ENCODE measurements at regions of chr18 and their contacts with region 1.

Region 1: GRCh38 chr18:50356036-50356945 is 18.6 kb upstream of the SKA1 start:
- H3K4me3 ChIP-seq: no peak overlapping the region
- H3K27ac ChIP-seq: no peak overlapping the region
- H3K4me1 ChIP-seq: peaks cover 3% of the 10 kb centered on the region; the same call in 1 of the 2 replicates
- CTCF ChIP-seq: peak; percentile 25; the same call in 1 of the 2 replicates

Region 2: DNA sequence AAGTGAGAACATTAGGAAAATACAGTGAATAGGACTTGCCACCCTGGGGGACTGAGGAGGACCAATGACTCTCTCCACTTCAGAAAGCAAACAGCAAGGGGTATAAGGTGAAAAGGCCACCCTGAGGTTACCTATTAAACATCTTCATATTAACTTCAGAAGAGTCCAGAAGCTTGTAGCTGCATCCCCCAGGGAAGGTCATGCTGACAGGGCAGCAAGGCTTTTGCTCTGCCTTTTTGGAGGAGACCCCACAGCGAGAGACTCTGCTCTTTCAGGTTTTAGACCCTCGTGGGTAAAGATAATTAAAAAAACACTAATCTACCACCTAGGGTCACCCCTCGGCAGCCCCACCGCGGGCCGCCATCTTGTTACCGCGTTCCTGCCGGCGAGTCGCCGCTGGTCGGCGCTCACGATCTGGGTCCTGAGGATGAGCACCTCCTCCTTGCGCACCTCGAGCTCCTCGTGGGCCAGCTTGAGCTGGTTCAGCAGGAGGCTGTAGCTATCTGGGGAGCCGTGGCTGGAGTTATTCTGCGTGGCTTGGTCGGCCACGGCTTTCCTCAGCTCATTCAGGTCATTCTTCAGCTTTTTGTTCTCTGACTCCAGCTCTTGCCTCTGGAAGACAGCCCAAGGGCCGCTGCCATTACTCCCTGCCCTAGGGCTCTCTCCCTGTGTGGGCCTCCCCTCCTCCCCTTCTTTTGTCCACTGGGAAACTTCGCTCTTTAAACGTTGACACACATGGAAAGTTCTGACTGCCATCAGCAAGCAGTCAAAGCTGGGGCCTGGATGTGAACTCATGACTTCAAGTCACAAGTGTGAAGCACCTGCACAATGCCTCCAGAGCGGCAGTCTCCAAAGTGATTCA is 492.3 kb before region 1 on chr18:
- CTCF ChIA-PET with region 1: interaction called, 11 read pairs
- POLR2A ChIA-PET with region 1: no interaction called
- H3K4me3 ChIP-seq: peak overlapping the region; percentile 14; the same call in 1 of the 2 replicates
- H3K27ac ChIP-seq: no peak overlapping the region; the same call in 1 of the 2 replicates
- H3K4me1 ChIP-seq: no peaks in the 10 kb centered on the region
- CTCF ChIP-seq: peak; percentile 71

Region 3: DNA sequence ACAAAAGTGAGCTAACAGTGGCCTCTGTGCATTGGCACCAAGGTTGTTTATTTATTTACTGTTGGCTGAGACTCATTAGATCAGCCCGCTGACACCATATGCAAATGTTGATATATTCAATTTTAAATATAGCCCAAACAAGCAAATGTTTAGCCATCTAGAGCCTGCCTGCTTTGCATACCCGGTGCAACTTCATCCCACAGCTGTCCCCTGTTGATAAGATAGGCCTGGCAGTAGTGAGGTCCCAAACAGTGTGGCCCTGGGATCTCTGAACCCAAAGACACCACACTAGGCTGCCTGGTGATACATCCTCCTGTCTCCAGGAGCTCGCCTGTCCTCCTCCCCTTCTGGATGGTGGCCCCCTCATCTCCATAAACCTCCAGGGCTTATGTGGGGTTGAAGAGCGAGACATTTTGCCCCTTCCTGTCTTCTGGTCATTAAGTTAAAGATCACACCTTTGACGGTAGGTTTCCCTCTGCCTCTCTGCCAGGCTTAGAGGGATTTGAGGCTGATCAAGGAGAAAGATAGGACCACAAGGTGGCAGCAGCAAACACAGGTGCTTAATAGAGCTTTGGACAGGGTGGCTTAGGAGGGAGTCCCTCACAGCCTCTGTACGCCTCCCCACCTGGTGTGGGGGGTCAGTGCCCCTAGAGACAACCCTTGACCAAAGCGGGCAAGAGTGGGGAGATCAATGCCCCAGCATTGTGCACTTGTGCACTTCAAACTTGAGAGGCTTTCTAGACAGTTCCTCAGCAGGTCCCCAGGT is 137.7 kb before region 1 on chr18:
- CTCF ChIA-PET with region 1: interaction called, 88 read pairs
- POLR2A ChIA-PET with region 1: no interaction called
- H3K4me3 ChIP-seq: no peak overlapping the region
- H3K27ac ChIP-seq: no peak overlapping the region
- H3K4me1 ChIP-seq: no peaks in the 10 kb centered on the region
- CTCF ChIP-seq: peak; percentile 63; the same call in 1 of the 2 replicates

Region 4: GRCh38 chr18:50240083-50240563 is 116.2 kb before region 1 on chr18:
- CTCF ChIA-PET with region 1: interaction called, 10 read pairs
- POLR2A ChIA-PET with region 1: no interaction called
- H3K4me3 ChIP-seq: no peak overlapping the region
- H3K27ac ChIP-seq: no peak overlapping the region
- H3K4me1 ChIP-seq: no peaks in the 10 kb centered on the region
- CTCF ChIP-seq: no peak

Region 5: GRCh38 chr18:50281295-50281971 is 74.9 kb before region 1 on chr18 and contains the start of gene MBD1:
- CTCF ChIA-PET with region 1: interaction called, 6 read pairs
- POLR2A ChIA-PET with region 1: interaction called, 10 read pairs
- H3K4me3 ChIP-seq: peak within 1 kb of the TSS; percentile 93
- H3K27ac ChIP-seq: peak within 1 kb of the TSS; percentile 74
- H3K4me1 ChIP-seq: peaks cover 6% of the 10 kb centered on the region; the same call in 1 of the 2 replicates
- CTCF ChIP-seq: peak; percentile 93

Region 6: DNA sequence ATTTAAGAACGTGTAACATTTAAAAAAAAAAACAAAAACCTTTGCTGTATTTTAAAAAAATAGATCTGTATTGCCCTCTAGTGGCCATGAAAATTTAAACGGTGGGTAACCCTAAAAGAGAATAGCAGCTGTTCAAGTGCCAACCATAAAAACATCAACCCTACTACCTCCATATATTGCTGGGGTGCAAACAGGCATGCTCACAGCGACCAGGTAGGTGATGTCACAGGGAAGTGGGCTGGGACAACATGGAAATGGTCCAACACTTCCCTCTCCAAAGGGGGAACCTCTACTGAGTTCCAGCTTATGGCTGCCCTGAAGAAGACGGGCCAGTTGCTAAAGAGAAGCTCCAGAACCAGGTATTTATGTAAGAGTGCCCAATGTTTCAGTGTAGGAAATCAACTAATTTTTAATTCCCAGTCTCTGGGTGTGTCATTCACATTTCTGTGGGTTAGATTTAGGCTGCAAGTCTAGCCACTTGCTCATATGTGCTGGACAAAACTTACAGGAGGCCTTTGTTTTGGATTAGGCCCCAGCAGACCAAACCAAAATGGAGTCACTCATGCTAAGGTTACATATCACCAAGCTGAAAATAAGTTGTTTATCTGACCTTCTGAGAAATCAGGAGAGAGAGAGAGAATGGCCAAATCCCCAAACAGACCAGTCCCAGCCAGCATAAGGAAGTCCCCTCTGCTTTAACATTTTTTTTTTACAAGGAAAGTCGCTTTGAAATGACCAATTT is 73.1 kb after region 1 on chr18:
- CTCF ChIA-PET with region 1: interaction called, 26 read pairs
- POLR2A ChIA-PET with region 1: no interaction called
- H3K4me3 ChIP-seq: no peak overlapping the region
- H3K27ac ChIP-seq: no peak overlapping the region
- H3K4me1 ChIP-seq: no peaks in the 10 kb centered on the region
- CTCF ChIP-seq: no peak

Region 7: GRCh38 chr18:50871846-50872245 is 515.6 kb after region 1 on chr18:
- CTCF ChIA-PET with region 1: no interaction called
- POLR2A ChIA-PET with region 1: no interaction called
- H3K4me3 ChIP-seq: no peak overlapping the region
- H3K27ac ChIP-seq: no peak overlapping the region
- H3K4me1 ChIP-seq: peaks cover 5% of the 10 kb centered on the region; the same call in 1 of the 2 replicates
- CTCF ChIP-seq: no peak